Endothelial cell of umbilical vein (primary cell): ENCODE measurements at regions of chr6 and their contacts with region 1.

Region 1: GRCh38 chr6:34248727-34249551 is at the start of gene SMIM29:
- DNase-seq: peak; percentile 90
- H3K4me3 ChIP-seq: peak within 1 kb of the TSS; percentile 66 to 88 (median 80)
- H3K27ac ChIP-seq: peak within 1 kb of the TSS; percentile 81
- H3K4me1 ChIP-seq: peaks cover 33% of the 10 kb centered on the region
- H3K27me3 ChIP-seq: no peaks in the 10 kb centered on the region
- CTCF ChIP-seq: peak; percentile 84 to 89
- POLR2A ChIP-seq: peak; percentile 86
- total RNA-seq, gene SMIM29: 37.3 and 37.6 TPM in 2 replicates

Region 2: GRCh38 chr6:34223956-34224940 is 24.7 kb before region 1 on chr6:
- CTCF ChIA-PET with region 1: interaction called, 7 read pairs
- POLR2A ChIA-PET with region 1: interaction called, 6 read pairs
- dilution Hi-C with region 1: no loop called
- intact Hi-C with region 1: loop called (anchors 1 kb)
- DNase-seq: peak; percentile 95
- H3K4me3 ChIP-seq: peak overlapping the region; percentile 37 to 69 (median 41)
- H3K27ac ChIP-seq: peak overlapping the region; percentile 99
- H3K4me1 ChIP-seq: peaks cover 16% of the 10 kb centered on the region
- H3K27me3 ChIP-seq: no peaks in the 10 kb centered on the region
- CTCF ChIP-seq: no peak
- POLR2A ChIP-seq: no peak

Region 3: DNA sequence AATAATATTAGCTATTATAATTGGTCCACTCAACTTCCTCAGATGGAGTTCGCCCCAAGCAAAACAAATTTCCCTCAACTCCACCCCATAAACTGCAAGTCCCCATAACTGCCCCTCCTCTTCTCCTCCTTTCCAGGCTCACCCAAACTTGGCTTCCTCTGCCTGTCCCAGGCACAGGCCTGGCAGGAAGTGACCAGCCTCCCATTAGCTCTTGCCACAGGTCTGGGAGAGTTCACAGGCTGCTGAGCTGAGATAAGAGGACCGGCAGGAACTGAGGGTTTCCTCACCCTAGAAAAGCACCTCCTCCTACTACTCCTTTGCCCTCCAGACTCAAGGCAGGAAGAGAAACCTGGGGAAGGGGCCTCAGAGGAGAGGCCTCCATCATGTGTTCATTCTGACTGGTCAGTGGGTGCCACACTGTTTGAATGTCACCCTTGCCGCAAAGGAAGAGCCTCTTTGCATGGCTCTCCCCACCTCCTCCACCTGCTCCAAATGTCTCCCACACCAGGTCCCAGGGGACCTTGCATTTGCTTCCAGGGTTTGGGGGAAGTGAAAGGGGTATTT is 24.4 kb after region 1 on chr6:
- CTCF ChIA-PET with region 1: interaction called, 10 read pairs
- POLR2A ChIA-PET with region 1: no interaction called
- dilution Hi-C with region 1: no loop called
- intact Hi-C with region 1: loop called (anchors 1 kb)
- DNase-seq: peak; percentile 95
- H3K4me3 ChIP-seq: no peak overlapping the region
- H3K27ac ChIP-seq: peak overlapping the region; percentile 6
- H3K4me1 ChIP-seq: peaks cover 18% of the 10 kb centered on the region
- H3K27me3 ChIP-seq: no peaks in the 10 kb centered on the region
- CTCF ChIP-seq: no peak
- POLR2A ChIP-seq: peak; percentile 75

Region 4: GRCh38 chr6:34392497-34393190 is 143.7 kb after region 1 on chr6 and contains the start of gene NUDT3:
- CTCF ChIA-PET with region 1: interaction called, 35 read pairs
- POLR2A ChIA-PET with region 1: interaction called, 4 read pairs
- dilution Hi-C with region 1: no loop called
- intact Hi-C with region 1: loop called (anchors 1 kb)
- DNase-seq: peak; percentile 96
- H3K4me3 ChIP-seq: peak within 1 kb of the TSS; percentile 84 to 98 (median 96)
- H3K27ac ChIP-seq: peak within 1 kb of the TSS; percentile 27
- H3K4me1 ChIP-seq: peaks cover 11% of the 10 kb centered on the region
- H3K27me3 ChIP-seq: no peaks in the 10 kb centered on the region
- CTCF ChIP-seq: peak; percentile 89 to 95
- POLR2A ChIP-seq: peak; percentile 31
- total RNA-seq, gene NUDT3: 30.9 and 31.7 TPM in 2 replicates